Naive thymus-derived CD4-positive, alpha-beta T cell (primary cell): ENCODE measurements at regions of chr11 and their contacts with region 1.

Region 1: GRCh38 chr11:118907051-118908042 is 18.4 kb downstream of the BCL9L start:
- DNase-seq: peak; percentile 73 to 91 (median 82)
- ATAC-seq: peak; percentile 83
- H3K4me3 ChIP-seq: no peak overlapping the region
- H3K4me3 Mint-ChIP-seq: peak overlapping the region in 9 of 10 donors; percentile 15 to 99 (median 56)
- H3K27ac ChIP-seq: peak overlapping the region; percentile 96
- H3K27ac Mint-ChIP-seq: peak overlapping the region; percentile 80 to 96 (median 93)
- H3K4me1 ChIP-seq: peaks cover 28 to 50% of the 10 kb centered on the region in 2 donors
- H3K4me1 Mint-ChIP-seq: peaks cover 30 to 53% (median 46%) of the 10 kb centered on the region in 7 donors
- H3K27me3 ChIP-seq: no peaks in the 10 kb centered on the region
- H3K27me3 Mint-ChIP-seq: no peaks in the 10 kb centered on the region

Region 2: DNA sequence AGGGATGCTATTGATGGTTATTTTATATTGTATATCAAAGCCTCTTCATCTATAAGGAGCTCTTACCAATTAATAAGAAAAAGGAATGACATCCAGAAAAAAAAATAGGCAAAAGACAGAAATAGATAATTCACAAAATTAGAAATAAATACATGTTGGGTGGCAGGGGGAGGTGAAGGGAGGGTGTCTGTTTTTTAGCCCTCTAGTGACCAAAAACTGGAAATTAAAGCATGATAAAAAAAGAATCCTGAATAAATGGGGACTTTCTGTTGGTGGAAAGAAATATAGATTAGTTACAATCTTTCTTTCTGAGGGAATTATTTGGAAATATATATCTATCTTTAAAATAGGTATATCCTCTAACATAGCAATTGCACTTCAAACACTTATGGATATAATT is 422.1 kb before region 1 on chr11:
- CTCF ChIA-PET with region 1: no interaction called
- POLR2A ChIA-PET with region 1: no interaction called
- intact Hi-C with region 1: no loop called
- DNase-seq: peak in 1 of 9 donors; percentile 9
- ATAC-seq: no peak
- H3K4me3 ChIP-seq: no peak overlapping the region
- H3K4me3 Mint-ChIP-seq: no peak overlapping the region
- H3K27ac ChIP-seq: peak overlapping the region; percentile 2
- H3K27ac Mint-ChIP-seq: peak overlapping the region in 4 of 9 donors; percentile 31 to 84 (median 54)
- H3K4me1 ChIP-seq: no peaks in the 10 kb centered on the region
- H3K4me1 Mint-ChIP-seq: peaks cover 0 to 6% (median 5%) of the 10 kb centered on the region in 7 donors
- H3K27me3 ChIP-seq: no peaks in the 10 kb centered on the region
- H3K27me3 Mint-ChIP-seq: no peaks in the 10 kb centered on the region

Region 3: DNA sequence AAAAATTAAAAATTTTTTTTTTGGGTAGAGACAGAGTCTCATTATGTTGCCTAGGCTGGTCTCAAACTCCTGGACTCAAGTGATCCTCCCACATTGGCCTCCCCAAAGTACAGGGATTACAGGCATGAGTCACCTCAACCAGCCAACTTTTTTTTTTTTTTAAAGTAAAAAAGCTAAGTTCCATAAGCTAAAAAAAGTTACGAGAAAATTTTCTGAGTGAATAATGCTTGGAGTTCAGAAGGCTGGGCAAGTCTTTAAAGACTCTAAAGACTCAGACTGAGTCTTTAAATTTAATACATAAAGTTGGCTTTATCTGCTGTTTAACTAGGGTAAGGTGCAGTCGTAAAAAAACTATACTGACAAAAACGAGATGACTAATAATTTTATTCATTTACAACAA is 122.0 kb before region 1 on chr11:
- CTCF ChIA-PET with region 1: interaction called, 6 read pairs
- POLR2A ChIA-PET with region 1: interaction called, 201 read pairs
- intact Hi-C with region 1: loop called in 1 of 2 experiments (anchors 5 kb)
- DNase-seq: no peak
- ATAC-seq: no peak
- H3K4me3 ChIP-seq: peak overlapping the region; percentile 24
- H3K4me3 Mint-ChIP-seq: peak overlapping the region in 8 of 10 donors; percentile 63 to 100 (median 86)
- H3K27ac ChIP-seq: peak overlapping the region; percentile 50
- H3K27ac Mint-ChIP-seq: peak overlapping the region in 3 of 9 donors; percentile 25 to 86 (median 27)
- H3K4me1 ChIP-seq: peaks cover 60 to 70% of the 10 kb centered on the region in 2 donors
- H3K4me1 Mint-ChIP-seq: peaks cover 18 to 73% (median 51%) of the 10 kb centered on the region in 7 donors
- H3K27me3 ChIP-seq: no peaks in the 10 kb centered on the region
- H3K27me3 Mint-ChIP-seq: no peaks in the 10 kb centered on the region

Region 4: GRCh38 chr11:118878163-118878563 is 29.2 kb before region 1 on chr11:
- CTCF ChIA-PET with region 1: interaction called, 5 read pairs
- POLR2A ChIA-PET with region 1: interaction called, 34 read pairs
- intact Hi-C with region 1: no loop called
- DNase-seq: peak in 7 of 9 donors; percentile 36 to 65 (median 59)
- ATAC-seq: peak; percentile 28
- H3K4me3 ChIP-seq: peak overlapping the region; percentile 26
- H3K4me3 Mint-ChIP-seq: peak overlapping the region in 9 of 10 donors; percentile 40 to 86 (median 68)
- H3K27ac ChIP-seq: peak overlapping the region; percentile 80
- H3K27ac Mint-ChIP-seq: peak overlapping the region; percentile 95 to 100 (median 99)
- H3K4me1 ChIP-seq: peaks cover 63 to 81% of the 10 kb centered on the region in 2 donors
- H3K4me1 Mint-ChIP-seq: peaks cover 65 to 98% (median 92%) of the 10 kb centered on the region in 7 donors
- H3K27me3 ChIP-seq: no peaks in the 10 kb centered on the region
- H3K27me3 Mint-ChIP-seq: no peaks in the 10 kb centered on the region

Region 5: DNA sequence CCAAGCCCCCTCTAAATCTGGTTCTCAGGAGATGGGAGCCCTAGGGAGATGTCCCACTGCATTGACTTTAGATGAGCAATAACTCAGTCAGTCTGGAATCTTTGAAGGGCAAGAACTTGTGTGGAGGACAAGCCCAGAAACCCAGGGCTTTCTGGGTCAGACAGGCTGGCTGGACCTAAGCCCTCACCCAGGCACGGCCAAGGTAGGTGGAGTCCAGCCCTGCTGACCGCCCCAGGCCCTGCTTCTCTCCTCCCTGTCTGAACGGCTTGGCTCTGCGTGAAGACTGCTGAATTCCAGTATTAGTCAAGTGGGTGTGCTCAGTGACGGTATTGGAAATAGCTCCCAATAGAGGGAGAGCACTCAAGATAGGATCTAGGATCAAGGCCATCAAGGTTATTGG is 17.6 kb before region 1 on chr11:
- CTCF ChIA-PET with region 1: interaction called, 9 read pairs
- POLR2A ChIA-PET with region 1: interaction called, 30 read pairs
- intact Hi-C with region 1: no loop called
- DNase-seq: no peak
- ATAC-seq: no peak
- H3K4me3 ChIP-seq: no peak overlapping the region
- H3K4me3 Mint-ChIP-seq: peak overlapping the region in 5 of 10 donors; percentile 8 to 82 (median 59)
- H3K27ac ChIP-seq: no peak overlapping the region
- H3K27ac Mint-ChIP-seq: peak overlapping the region in 6 of 9 donors; percentile 52 to 98 (median 96)
- H3K4me1 ChIP-seq: peaks cover 58 to 71% of the 10 kb centered on the region in 2 donors
- H3K4me1 Mint-ChIP-seq: peaks cover 53 to 92% (median 83%) of the 10 kb centered on the region in 7 donors
- H3K27me3 ChIP-seq: no peaks in the 10 kb centered on the region
- H3K27me3 Mint-ChIP-seq: no peaks in the 10 kb centered on the region

Region 6: GRCh38 chr11:118918128-118918685 is 10.9 kb after region 1 on chr11:
- CTCF ChIA-PET with region 1: interaction called, 3 read pairs
- POLR2A ChIA-PET with region 1: interaction called, 11 read pairs
- intact Hi-C with region 1: loop called in 1 of 2 experiments (anchors 1 kb)
- DNase-seq: peak in 6 of 9 donors; percentile 13 to 75 (median 60)
- ATAC-seq: peak; percentile 14
- H3K4me3 ChIP-seq: peak overlapping the region; percentile 57
- H3K4me3 Mint-ChIP-seq: peak overlapping the region; percentile 86 to 99 (median 95)
- H3K27ac ChIP-seq: peak overlapping the region; percentile 96
- H3K27ac Mint-ChIP-seq: peak overlapping the region; percentile 91 to 100 (median 100)
- H3K4me1 ChIP-seq: peaks cover 66 to 90% of the 10 kb centered on the region in 2 donors
- H3K4me1 Mint-ChIP-seq: peaks cover 57 to 79% (median 70%) of the 10 kb centered on the region in 7 donors
- H3K27me3 ChIP-seq: no peaks in the 10 kb centered on the region
- H3K27me3 Mint-ChIP-seq: no peaks in the 10 kb centered on the region

Region 7: GRCh38 chr11:119196833-119197483 is 289.6 kb after region 1 on chr11:
- CTCF ChIA-PET with region 1: no interaction called
- POLR2A ChIA-PET with region 1: no interaction called
- intact Hi-C with region 1: loop called in 1 of 2 experiments (anchors 2 kb)
- DNase-seq: peak in 8 of 9 donors; percentile 51 to 84 (median 78)
- ATAC-seq: peak; percentile 98
- H3K4me3 ChIP-seq: no peak overlapping the region
- H3K4me3 Mint-ChIP-seq: no peak overlapping the region
- H3K27ac ChIP-seq: no peak overlapping the region
- H3K27ac Mint-ChIP-seq: no peak overlapping the region
- H3K4me1 ChIP-seq: no peaks in the 10 kb centered on the region
- H3K4me1 Mint-ChIP-seq: peaks cover 0 to 10% (median 5%) of the 10 kb centered on the region in 7 donors
- H3K27me3 ChIP-seq: no peaks in the 10 kb centered on the region
- H3K27me3 Mint-ChIP-seq: peaks cover 0 to 5% (median 0%) of the 10 kb centered on the region in 5 donors